Mammary epithelial cell (primary cell): ENCODE measurements at regions of chr18 and their contacts with region 1.

Region 1: GRCh38 chr18:35407871-35408481 is 30.8 kb upstream of the ZNF396 start:
- DNase-seq: peak; percentile 66
- H3K4me3 ChIP-seq: no peak overlapping the region
- H3K27ac ChIP-seq: no peak overlapping the region
- H3K4me1 ChIP-seq: peaks cover 40% of the 10 kb centered on the region
- H3K27me3 ChIP-seq: no peaks in the 10 kb centered on the region
- CTCF ChIP-seq: peak; percentile 69 to 81

Region 2: GRCh38 chr18:35478520-35479435 is 70.8 kb after region 1 on chr18:
- CTCF ChIA-PET with region 1: interaction called, 10 read pairs
- dilution Hi-C with region 1: no loop called
- in situ Hi-C with region 1: no loop called
- intact Hi-C with region 1: loop called (anchors 1 kb)
- DNase-seq: peak; percentile 100
- H3K4me3 ChIP-seq: peak overlapping the region; percentile 46 to 65 (median 63)
- H3K27ac ChIP-seq: peak overlapping the region; percentile 100
- H3K4me1 ChIP-seq: peaks cover 37% of the 10 kb centered on the region
- H3K27me3 ChIP-seq: no peaks in the 10 kb centered on the region
- CTCF ChIP-seq: peak in 1 of 2 donors; percentile 5

Region 3: DNA sequence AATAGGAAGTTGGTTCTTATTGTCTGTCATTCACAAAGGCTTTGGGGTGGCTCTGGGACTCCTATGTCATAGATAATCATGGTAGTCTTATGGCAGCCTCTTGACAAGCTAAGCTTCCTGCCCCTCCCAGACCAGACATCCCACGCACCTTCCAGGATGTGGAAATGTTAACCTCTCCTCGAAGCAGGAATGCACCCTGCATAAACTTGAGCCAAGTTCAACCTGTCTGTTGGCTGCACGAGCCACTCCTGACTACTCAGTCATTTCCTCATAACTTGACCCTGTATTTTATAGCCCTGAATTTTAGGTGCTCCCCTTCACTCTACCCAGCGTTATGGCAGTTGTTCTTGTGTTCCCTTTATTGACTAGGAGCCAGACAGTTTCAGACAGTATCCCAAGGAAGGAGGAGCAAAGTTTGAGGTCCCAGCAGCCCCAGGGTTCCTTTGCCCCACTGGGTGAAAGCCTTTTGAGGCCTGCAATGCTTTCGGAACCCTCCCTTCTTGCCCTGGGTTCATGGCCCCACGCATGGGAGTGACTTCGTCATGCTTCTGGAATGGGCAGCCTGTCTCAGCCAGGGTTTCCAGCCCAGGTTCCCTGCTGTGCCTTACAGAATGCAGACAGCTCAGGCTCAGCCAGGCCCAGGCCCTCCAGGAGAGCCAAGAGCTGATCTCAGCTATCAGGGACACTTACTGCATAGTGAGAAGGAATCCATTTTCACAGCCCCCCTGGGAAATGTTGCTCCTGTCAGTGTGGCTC is 105.4 kb after region 1 on chr18:
- CTCF ChIA-PET with region 1: no interaction called
- dilution Hi-C with region 1: no loop called
- in situ Hi-C with region 1: no loop called
- intact Hi-C with region 1: loop called (anchors 1 kb)
- DNase-seq: peak; percentile 61
- H3K4me3 ChIP-seq: no peak overlapping the region
- H3K27ac ChIP-seq: peak overlapping the region; percentile 9
- H3K4me1 ChIP-seq: peaks cover 38% of the 10 kb centered on the region
- H3K27me3 ChIP-seq: no peaks in the 10 kb centered on the region
- CTCF ChIP-seq: no peak

Region 4: GRCh38 chr18:35580701-35581539 is 172.9 kb after region 1 on chr18:
- CTCF ChIA-PET with region 1: no interaction called
- dilution Hi-C with region 1: no loop called
- in situ Hi-C with region 1: loop called in 1 of 2 experiments (anchors 10 kb)
- intact Hi-C with region 1: loop called (anchors 2 kb)
- DNase-seq: peak; percentile 58
- H3K4me3 ChIP-seq: peak overlapping the region; percentile 65 to 77 (median 69)
- H3K27ac ChIP-seq: peak overlapping the region; percentile 55
- H3K4me1 ChIP-seq: peaks cover 9% of the 10 kb centered on the region
- H3K27me3 ChIP-seq: no peaks in the 10 kb centered on the region
- CTCF ChIP-seq: no peak